Cardiac septum (tissue), 1 donor: ENCODE measurements at regions of chr11 and their contacts with region 1.

Region 1: DNA sequence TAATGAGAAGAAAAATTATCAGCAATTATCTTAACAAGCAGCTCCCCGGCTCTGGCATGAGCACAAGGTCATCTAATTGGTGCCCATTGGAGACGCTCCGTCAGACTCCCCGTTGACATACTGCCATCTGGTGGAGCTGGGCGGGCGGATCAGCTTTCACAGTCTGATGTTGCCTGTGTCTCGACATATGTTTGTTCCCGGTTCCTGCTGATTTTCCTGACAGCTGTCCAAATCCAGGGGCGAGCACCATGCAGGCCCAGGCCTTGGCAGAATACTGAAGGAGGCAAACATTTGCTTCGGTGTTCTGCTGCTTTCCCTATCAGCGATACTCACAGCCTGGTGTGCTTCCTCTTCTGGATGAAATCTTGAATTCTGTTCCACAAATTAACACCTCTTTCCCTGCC is 43.8 kb upstream of the BARX2 start:
- DNase-seq: peak; percentile 89

Region 2: GRCh38 chr11:129117595-129118350 is 214.1 kb before region 1 on chr11:
- intact Hi-C with region 1: loop called (anchors 1 kb)
- DNase-seq: no peak

Region 3: GRCh38 chr11:129131316-129131715 is 200.6 kb before region 1 on chr11:
- intact Hi-C with region 1: loop called (anchors 5 kb)
- DNase-seq: no peak

Region 4: GRCh38 chr11:129230006-129230405 is 101.9 kb before region 1 on chr11:
- intact Hi-C with region 1: loop called (anchors 10 kb)
- DNase-seq: no peak

Region 5: DNA sequence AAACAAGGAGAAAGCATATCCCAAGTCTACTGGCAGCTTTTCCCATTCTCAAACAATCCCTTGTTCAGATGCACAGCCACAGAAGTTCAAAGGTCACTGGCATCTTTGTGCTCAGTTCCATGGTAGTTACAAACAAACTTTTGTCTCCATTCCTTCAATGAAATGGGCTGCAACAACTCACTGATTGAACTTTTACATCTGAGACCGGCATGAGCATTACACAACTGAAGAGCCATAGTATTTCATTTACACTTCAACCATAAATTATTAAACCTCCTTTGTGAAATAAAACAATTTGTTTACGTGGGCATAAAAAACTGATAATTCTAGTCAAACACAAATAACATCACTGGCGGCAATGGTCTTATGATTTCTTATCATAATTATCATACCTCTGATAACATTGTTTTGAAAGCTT is 71.9 kb before region 1 on chr11:
- intact Hi-C with region 1: no loop called
- DNase-seq: no peak

Region 6: GRCh38 chr11:129279326-129280026 is 52.4 kb before region 1 on chr11:
- intact Hi-C with region 1: no loop called
- DNase-seq: peak; percentile 81

Region 7: GRCh38 chr11:129352676-129353075 is 20.8 kb after region 1 on chr11:
- intact Hi-C with region 1: no loop called
- DNase-seq: no peak